ENCODE measurements at regions of chr17 and their contacts with region 1.

Region 1: GRCh38 chr17:16285957-16286640 is 67.2 kb downstream of the CENPV start:
- DNase-seq: peak; percentile 90
- H3K4me3 Mint-ChIP-seq: peak overlapping the region; percentile 67
- H3K27ac Mint-ChIP-seq: peak overlapping the region; percentile 95
- H3K4me1 Mint-ChIP-seq: peaks cover 47% of the 10 kb centered on the region
- H3K27me3 Mint-ChIP-seq: no peaks in the 10 kb centered on the region

Region 2: GRCh38 chr17:15954222-15954621 is 331.9 kb before region 1 on chr17:
- CTCF ChIA-PET with region 1: no interaction called
- intact Hi-C with region 1: loop called (anchors 1 kb)
- DNase-seq: no peak
- H3K4me3 Mint-ChIP-seq: no peak overlapping the region
- H3K27ac Mint-ChIP-seq: no peak overlapping the region
- H3K4me1 Mint-ChIP-seq: peaks cover 22% of the 10 kb centered on the region
- H3K27me3 Mint-ChIP-seq: peaks cover 27% of the 10 kb centered on the region

Region 3: DNA sequence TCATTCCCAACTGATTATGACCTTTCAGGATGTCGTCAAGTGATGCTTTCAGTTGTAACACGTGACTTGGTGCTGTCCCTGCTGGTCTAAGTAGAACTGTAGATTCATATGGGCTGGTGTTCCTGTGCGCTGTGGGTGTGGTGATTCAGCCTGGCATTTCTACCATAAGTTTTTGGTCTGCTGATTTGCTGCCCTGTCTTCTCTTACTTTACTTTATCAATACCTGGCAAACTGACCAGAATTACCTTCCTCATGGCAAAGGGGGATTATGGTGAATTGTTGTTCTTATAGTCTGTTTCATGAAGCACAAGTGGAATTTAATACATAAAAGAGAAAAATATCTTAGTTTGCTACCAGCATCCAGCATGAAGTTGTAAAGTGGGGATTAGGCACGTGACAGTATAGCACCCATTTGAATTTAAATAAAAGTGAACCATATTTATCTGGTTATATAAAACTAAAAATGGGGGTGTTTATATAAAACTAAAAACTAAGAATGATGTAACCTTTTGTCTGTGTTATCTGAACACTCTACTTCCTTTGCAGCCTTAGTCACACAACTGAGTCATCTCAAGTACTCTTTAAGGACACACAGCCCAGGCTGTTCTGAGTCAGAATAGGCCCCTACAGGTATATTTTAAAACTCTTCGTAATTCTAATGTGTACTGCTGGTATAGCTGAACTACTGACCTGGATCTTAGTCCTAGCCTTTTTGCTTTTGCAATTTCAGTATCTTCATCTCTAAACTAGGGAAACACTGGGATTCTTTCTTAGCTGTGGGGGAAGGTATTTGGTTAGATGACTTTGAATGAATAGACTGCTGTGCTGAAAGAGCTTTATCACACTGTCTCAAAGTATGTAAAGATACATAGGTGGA is 258.2 kb before region 1 on chr17:
- CTCF ChIA-PET with region 1: no interaction called
- intact Hi-C with region 1: loop called (anchors 1 kb)
- DNase-seq: peak; percentile 82
- H3K4me3 Mint-ChIP-seq: peak overlapping the region; percentile 52
- H3K27ac Mint-ChIP-seq: peak overlapping the region; percentile 97
- H3K4me1 Mint-ChIP-seq: peaks cover 40% of the 10 kb centered on the region
- H3K27me3 Mint-ChIP-seq: no peaks in the 10 kb centered on the region

Region 4: DNA sequence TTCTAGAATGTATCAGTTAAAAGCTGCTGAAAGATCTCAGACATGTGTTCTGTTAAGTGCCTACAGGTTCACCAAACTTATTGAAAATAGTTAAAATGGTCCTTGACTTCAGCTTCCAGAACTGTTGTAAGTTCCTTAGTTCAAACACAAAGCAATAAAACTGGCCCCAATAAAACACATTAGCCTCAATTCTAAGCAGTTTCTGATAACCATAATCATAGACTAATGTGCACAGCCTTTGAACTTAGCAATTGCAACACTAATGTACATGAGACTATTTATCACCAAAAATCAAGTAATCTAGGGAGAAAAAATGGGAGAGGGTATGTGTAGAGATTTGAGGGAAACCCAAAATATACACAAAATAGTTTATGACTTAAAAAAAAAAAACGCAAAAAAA is 53.7 kb before region 1 on chr17:
- CTCF ChIA-PET with region 1: interaction called, 6 read pairs
- intact Hi-C with region 1: loop called (anchors 1 kb)
- DNase-seq: no peak
- H3K4me3 Mint-ChIP-seq: no peak overlapping the region
- H3K27ac Mint-ChIP-seq: no peak overlapping the region
- H3K4me1 Mint-ChIP-seq: peaks cover 24% of the 10 kb centered on the region
- H3K27me3 Mint-ChIP-seq: no peaks in the 10 kb centered on the region

Region 5: DNA sequence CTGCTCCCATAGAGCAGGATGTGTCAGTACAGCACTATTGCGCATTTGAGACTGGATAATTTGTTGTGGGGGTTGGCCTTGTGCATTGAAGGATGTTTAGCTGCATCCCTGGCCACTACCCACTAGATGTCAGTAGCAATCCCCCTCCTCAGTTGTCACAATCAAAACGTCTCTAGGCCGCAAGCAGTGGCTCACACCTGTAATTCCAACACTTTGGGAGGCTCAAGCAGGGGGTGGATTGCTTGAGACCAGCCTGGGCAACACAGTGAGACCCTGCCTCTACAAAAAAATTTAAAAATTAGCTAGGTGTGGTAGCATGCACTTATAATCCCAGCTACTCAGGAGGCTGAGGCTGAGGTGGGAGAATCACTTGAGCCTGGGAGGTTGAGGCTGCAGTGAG is 18.7 kb after region 1 on chr17:
- CTCF ChIA-PET with region 1: interaction called, 13 read pairs
- intact Hi-C with region 1: no loop called
- DNase-seq: peak; percentile 37
- H3K4me3 Mint-ChIP-seq: no peak overlapping the region
- H3K27ac Mint-ChIP-seq: no peak overlapping the region
- H3K4me1 Mint-ChIP-seq: peaks cover 3% of the 10 kb centered on the region
- H3K27me3 Mint-ChIP-seq: no peaks in the 10 kb centered on the region

Region 6: GRCh38 chr17:16380640-16381495 is 94.8 kb after region 1 on chr17 and contains the start of gene UBB:
- CTCF ChIA-PET with region 1: no interaction called
- intact Hi-C with region 1: loop called (anchors 1 kb)
- DNase-seq: peak; percentile 96
- H3K4me3 Mint-ChIP-seq: peak within 1 kb of the TSS; percentile 90
- H3K27ac Mint-ChIP-seq: peak within 1 kb of the TSS; percentile 96
- H3K4me1 Mint-ChIP-seq: peaks cover 35% of the 10 kb centered on the region
- H3K27me3 Mint-ChIP-seq: no peaks in the 10 kb centered on the region
- total RNA-seq, gene UBB: 1,579 to 1,628 TPM

Region 7: DNA sequence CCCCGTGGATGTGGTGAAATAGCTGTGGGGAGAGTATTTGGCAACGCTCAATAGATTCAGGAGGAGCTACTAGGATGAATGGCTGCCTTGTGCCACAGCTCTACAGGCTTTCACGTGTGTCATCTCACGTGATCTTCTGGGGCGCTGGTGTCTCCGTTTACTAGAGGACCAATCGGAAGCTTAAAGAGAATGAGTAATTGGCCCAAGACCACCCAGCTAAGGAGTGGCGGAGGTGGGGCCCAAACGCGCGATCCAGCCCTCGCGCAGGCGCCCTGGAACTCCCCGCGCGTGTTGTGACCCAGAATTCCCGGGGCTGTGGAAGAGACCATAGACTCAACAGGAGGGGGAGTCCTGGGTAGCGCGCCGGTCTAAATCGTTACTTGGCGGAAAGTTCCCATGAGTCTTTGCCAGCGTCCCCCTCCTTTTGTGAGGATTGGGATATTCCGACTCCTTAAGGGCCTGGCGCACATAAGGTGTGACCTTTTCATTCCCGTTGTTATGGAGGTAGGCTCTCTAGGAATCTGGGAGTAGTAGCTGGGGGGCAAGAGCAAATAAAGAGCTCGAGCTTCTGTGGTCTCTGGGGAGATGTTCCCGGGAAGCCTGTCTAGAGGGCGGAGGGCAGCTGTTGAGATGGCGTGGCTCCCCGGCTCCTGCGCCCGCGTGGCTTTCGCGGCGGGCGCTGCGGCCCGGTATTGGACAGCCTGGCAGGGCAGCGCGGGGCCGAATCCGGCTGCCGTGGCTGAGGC is 152.6 kb after region 1 on chr17:
- CTCF ChIA-PET with region 1: no interaction called
- intact Hi-C with region 1: loop called (anchors 5 kb)
- DNase-seq: peak; percentile 98
- H3K4me3 Mint-ChIP-seq: peak overlapping the region; percentile 99
- H3K27ac Mint-ChIP-seq: peak overlapping the region; percentile 99
- H3K4me1 Mint-ChIP-seq: peaks cover 39% of the 10 kb centered on the region
- H3K27me3 Mint-ChIP-seq: no peaks in the 10 kb centered on the region

Region 8: DNA sequence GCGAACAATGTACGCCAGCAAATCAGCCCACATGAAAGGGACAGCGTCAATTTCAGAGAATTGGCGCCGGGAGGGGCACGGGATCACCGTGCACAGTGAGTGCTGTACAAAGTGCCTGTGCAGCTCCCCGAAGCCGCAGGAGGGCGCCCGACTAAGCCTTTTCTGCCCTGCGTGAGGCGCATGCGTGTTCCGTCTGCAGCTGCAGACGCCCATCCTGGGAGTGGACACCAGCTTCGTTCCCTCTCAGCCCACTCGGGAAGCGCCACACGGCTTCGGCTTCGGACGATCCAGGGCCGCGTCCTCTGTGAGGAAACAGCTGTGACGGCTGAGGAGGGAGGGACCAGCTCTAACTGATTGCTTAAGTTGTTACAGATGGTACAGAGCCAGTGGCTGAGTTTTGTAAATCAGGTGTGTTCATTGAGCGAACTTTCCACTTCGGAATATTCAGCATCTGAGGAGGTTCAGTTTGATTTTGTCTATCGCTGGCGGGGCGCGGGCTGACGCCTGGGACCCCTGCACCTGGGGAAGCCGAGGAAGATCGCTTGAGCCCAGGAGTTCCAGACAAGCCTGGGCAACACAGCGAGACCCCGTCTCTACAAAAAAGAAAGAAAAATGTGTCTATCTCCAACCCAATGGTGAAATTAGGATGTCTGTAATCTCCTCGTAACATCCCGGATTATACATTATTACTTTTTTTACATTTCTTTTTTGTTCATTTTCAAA is 298.3 kb after region 1 on chr17:
- CTCF ChIA-PET with region 1: no interaction called
- intact Hi-C with region 1: no loop called
- DNase-seq: peak; percentile 98
- H3K4me3 Mint-ChIP-seq: peak overlapping the region; percentile 78
- H3K27ac Mint-ChIP-seq: peak overlapping the region; percentile 87
- H3K4me1 Mint-ChIP-seq: peaks cover 17% of the 10 kb centered on the region
- H3K27me3 Mint-ChIP-seq: peaks cover 14% of the 10 kb centered on the region

Measured in activated naive CD4-positive, alpha-beta T cell treated with anti-CD3 and anti-CD28 coated beads for 36 hours (primary cell).